GM18951 (cell line): ENCODE measurements at regions of chr18 and their contacts with region 1.

Region 1: GRCh38 chr18:12388440-12388839 is 11.4 kb upstream of the AFG3L2 start:
- POLR2A ChIP-seq: no peak

Region 2: DNA sequence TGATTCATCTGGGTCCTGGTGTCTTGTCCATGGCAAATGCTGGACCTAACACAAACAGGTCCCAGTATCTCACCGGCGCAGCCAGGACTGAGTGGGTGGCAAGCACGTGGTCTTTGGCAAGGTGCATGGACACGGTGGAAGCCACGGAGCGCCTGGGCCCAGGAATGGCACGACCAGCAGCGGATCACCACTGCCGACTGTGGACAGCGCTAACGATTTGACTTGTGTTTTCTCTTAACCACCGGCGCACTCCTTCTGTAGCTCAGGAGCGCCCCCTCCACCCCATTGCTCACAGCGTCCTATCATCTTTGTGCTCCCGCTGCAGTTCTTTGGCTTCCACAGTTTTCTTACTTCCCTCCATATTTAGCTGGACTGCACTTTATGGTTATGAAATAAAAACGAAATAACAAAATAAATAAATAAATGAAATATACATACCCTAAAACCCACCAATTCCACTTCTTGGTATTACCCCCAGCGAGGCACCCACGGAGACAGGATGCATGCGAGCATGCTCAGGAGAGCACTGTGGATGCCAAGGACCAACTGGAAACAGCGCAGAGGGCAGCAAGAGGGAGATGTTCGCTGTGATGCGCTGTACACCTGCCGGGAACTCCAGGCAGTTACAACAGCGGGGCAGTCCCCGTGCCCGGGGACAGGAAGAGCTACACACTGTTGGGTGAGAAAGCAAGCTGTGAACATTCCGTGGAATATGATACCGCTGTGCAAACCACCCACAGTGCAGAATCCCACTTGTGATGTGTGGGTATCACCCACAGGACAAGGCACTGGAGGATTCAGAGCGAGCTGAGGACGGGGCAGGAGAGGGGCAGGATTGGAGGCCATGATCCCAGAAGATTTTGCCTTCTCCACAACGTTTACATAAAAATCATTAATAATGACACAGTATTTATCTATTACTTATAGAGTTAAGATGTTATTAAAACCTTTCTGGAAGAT is 141.3 kb before region 1 on chr18:
- in situ Hi-C with region 1: no loop called
- POLR2A ChIP-seq: no peak

Region 3: DNA sequence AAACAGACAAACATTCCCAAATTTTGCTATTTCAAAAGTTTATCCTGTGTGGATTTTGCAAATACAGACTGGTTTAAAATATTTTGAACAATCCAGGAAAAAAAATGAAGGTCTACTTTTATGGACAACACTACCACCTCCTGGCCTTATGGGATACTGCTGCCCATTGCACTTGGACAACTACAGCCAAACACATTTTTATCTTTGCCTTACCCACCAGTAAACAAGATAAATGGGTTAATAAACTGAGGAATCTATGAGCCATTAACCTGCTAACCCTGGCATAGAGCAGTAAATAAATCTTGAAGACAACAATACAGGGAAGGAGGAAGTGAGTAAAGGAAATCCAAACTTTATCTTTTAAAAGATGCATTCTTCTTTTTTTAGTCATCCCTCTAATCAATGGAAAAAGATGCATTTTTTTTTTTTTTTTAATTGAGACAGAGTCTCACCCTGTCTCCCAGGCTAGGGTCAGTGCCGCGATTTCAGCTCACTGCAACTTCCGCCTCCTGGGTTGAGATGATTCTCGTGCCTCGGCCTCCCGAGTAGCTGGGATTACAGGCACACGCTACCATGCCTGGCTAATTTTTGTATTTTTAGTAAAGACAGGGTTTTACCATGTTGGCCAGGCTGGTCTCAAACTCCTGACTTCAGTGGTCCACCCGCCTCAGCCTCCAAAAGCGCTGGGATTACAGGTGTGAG is 271.6 kb after region 1 on chr18:
- in situ Hi-C with region 1: loop called (anchors 10 kb)
- POLR2A ChIP-seq: no peak